Activated naive CD4-positive, alpha-beta T cell treated with anti-CD3 and anti-CD28 coated beads, Interleukin-2, amount 10 ng/mL, durations not matched to agents 7 days and 5 days (primary cell): ENCODE measurements at regions of chr16 and their contacts with region 1.

Region 1: GRCh38 chr16:52191531-52192134 is 355.3 kb downstream of the TOX3 start:
- DNase-seq: peak; percentile 65
- H3K4me3 Mint-ChIP-seq: no peak overlapping the region
- H3K27ac Mint-ChIP-seq: no peak overlapping the region
- H3K4me1 Mint-ChIP-seq: no peaks in the 10 kb centered on the region
- H3K27me3 Mint-ChIP-seq: no peaks in the 10 kb centered on the region

Region 2: DNA sequence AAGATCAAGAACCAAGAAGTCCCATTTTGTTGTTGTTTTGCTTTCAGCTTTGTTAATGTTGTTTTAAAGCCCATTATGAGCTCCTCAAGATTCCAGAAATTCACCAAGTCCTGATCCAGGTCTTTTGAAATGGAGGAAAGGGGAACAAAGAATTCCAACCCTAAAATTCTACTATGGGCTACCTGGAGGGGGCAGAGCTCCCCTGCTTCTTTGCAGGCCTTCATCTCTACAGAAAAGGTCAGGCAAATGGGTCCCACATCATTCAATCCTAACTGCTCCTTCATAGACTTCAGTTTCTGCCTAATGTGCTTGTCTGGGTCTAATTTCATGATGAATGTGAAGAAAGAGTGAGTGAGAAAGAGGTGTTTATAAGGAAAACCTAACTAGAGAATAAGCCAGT is 20.2 kb before region 1 on chr16:
- CTCF ChIA-PET with region 1: interaction called, 10 read pairs
- DNase-seq: no peak
- H3K4me3 Mint-ChIP-seq: no peak overlapping the region
- H3K27ac Mint-ChIP-seq: no peak overlapping the region
- H3K4me1 Mint-ChIP-seq: no peaks in the 10 kb centered on the region
- H3K27me3 Mint-ChIP-seq: no peaks in the 10 kb centered on the region

Region 3: GRCh38 chr16:52912565-52913173 is 721.0 kb after region 1 on chr16:
- CTCF ChIA-PET with region 1: interaction called, 21 read pairs
- DNase-seq: peak; percentile 50
- H3K4me3 Mint-ChIP-seq: no peak overlapping the region
- H3K27ac Mint-ChIP-seq: no peak overlapping the region
- H3K4me1 Mint-ChIP-seq: no peaks in the 10 kb centered on the region
- H3K27me3 Mint-ChIP-seq: no peaks in the 10 kb centered on the region

Region 4: DNA sequence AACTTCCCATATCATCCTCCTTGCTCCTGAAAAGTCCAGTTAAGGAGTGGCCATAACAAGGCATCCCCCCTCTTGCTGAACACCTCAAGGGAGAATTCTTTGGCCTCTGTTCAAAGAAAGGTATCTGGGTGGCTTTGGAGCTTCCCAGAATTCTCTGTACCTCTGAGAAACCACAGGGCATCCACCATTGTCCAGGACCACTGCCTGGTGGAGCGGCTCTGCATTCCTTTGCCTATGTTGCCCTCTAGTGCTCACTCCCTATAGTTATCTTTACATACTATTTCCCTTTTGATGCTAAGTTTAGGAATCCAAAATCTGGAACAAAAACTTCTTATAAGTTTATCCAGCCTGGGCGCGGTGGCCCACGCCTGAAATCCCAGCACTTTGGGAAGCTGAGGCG is 830.7 kb after region 1 on chr16:
- CTCF ChIA-PET with region 1: interaction called, 10 read pairs
- DNase-seq: no peak
- H3K4me3 Mint-ChIP-seq: no peak overlapping the region
- H3K27ac Mint-ChIP-seq: no peak overlapping the region
- H3K4me1 Mint-ChIP-seq: no peaks in the 10 kb centered on the region
- H3K27me3 Mint-ChIP-seq: peaks cover 7% of the 10 kb centered on the region